Panc1 (cell line): ENCODE measurements at regions of chr2 and their contacts with region 1.

Region 1: DNA sequence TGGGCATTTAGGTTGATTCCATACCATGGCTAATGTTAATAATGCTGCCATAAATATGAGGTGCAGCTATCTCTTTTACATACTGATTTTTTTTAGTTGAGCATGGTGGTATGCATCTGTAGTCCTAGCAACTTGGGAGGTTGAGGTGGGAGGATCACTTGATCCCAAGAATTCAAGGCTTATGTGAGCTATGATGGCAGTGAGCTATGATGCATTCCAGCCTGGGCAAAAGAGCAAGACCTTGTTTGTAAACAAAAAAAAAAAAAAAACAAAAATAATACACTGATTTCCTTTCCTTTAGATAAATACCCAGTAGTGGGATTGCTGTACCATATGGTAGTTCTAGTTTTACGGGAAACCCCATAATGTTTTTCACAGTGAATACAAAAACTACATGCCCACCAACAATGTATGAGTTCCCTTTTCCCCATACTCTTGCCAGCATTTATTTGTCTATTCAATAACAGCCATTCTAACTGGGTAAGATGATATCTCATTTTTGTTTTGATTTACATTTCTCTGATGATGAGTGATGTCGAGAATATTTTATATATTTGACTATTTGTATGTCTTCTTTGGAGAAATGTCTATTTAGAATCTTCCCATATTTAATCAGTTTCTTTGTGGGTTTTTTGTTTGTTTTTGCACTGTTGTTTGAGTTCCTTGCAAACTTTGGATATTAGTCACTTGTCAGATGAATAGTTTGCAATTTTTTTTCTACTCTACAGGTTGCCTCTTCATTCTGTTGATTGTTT is 281.0 kb upstream of the KYNU start:
- DNase-seq: peak; percentile 36
- ATAC-seq: peak; percentile 86
- H3K4me3 ChIP-seq: no peak overlapping the region
- H3K27ac ChIP-seq: no peak overlapping the region
- H3K4me1 ChIP-seq: no peaks in the 10 kb centered on the region
- H3K27me3 ChIP-seq: no peaks in the 10 kb centered on the region
- CTCF ChIP-seq: no peak

Region 2: DNA sequence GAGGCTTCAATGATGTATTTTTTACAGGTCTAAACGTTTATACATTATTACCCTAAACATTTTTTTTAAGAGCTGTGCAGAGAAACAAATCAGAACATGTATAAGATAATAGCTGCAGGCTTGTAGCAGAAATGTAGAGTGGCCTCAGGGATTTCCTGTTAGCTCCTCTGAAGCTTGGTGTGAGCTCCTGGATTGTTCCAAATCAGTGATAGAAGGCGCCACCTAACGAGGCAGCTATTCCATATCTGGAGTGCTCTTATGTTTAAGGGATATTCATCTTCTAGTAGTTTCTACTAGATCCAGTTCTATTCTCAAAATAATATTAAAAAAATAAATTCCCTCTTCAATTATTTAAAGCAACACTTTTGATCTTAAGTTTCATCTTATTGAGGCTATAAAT is 558.8 kb before region 1 on chr2:
- CTCF ChIA-PET with region 1: no interaction called
- POLR2A ChIA-PET with region 1: no interaction called
- in situ Hi-C with region 1: no loop called
- intact Hi-C with region 1: no loop called
- DNase-seq: no peak
- ATAC-seq: no peak
- H3K4me3 ChIP-seq: no peak overlapping the region
- H3K27ac ChIP-seq: no peak overlapping the region
- H3K4me1 ChIP-seq: no peaks in the 10 kb centered on the region
- H3K27me3 ChIP-seq: no peaks in the 10 kb centered on the region
- CTCF ChIP-seq: peak; percentile 12; the same call in 1 of the 2 replicates

Region 3: GRCh38 chr2:142165790-142166189 is 430.7 kb before region 1 on chr2:
- CTCF ChIA-PET with region 1: no interaction called
- POLR2A ChIA-PET with region 1: no interaction called
- in situ Hi-C with region 1: no loop called
- intact Hi-C with region 1: loop called (anchors 10 kb)
- DNase-seq: no peak
- ATAC-seq: peak; percentile 80; the same call in 1 of the 2 replicates
- H3K4me3 ChIP-seq: no peak overlapping the region
- H3K27ac ChIP-seq: no peak overlapping the region
- H3K4me1 ChIP-seq: no peaks in the 10 kb centered on the region
- H3K27me3 ChIP-seq: no peaks in the 10 kb centered on the region
- CTCF ChIP-seq: peak; percentile 54

Region 4: GRCh38 chr2:142791335-142791734 is 194.8 kb after region 1 on chr2:
- CTCF ChIA-PET with region 1: no interaction called
- POLR2A ChIA-PET with region 1: no interaction called
- in situ Hi-C with region 1: no loop called
- intact Hi-C with region 1: no loop called
- DNase-seq: no peak
- ATAC-seq: no peak
- H3K4me3 ChIP-seq: no peak overlapping the region
- H3K27ac ChIP-seq: no peak overlapping the region
- H3K4me1 ChIP-seq: no peaks in the 10 kb centered on the region
- H3K27me3 ChIP-seq: no peaks in the 10 kb centered on the region
- CTCF ChIP-seq: no peak